ENCODE measurements at regions of chr9 and their contacts with region 1.

Region 1: DNA sequence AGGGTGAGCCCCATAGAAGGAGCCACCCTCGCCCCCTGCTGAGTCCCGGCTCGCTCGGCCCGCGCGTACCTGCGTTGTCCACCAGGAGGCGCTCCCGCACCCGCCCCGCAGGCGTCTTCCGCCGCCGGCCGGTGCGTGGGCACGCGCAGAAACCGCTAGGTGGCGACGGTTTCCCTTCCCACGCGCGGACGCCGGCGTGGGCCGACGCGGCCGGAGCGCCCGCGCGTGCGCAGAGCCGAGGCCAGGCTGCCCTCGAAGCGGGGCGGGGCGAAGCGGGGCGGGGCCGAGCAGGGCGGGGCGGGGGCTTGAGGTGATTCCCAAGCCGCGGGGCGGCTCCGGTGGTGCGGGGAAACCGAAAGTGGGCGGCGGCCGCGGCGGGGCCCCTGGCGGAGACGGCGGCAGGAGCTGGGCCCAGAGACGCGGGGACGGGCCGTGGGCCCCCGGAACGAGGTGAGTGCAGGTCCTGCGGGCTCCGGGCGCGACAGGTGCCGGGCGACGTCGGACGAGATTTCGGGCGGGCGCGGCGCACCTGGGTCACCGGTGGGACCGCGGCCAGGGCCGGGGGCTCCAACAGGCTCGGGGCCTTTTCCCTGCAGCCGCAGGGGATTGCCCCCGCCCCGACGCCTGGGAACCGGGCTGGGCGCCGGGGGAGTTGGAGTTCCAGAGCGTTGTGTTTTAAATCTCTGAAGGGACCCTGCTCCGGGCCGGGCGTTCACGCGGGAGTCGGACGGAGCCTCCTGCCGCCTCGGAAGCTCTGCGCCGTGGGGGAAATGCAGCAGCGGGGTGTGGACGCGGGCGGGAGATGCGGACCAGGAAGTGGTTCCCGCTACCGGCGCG is at the start of gene TDRD7:
- DNase-seq: peak; percentile 97
- H3K4me3 Mint-ChIP-seq: peak within 1 kb of the TSS; percentile 87
- H3K27ac Mint-ChIP-seq: peak within 1 kb of the TSS; percentile 81
- H3K4me1 Mint-ChIP-seq: peaks cover 23% of the 10 kb centered on the region
- H3K27me3 Mint-ChIP-seq: peaks cover 34% of the 10 kb centered on the region
- total RNA-seq, gene TDRD7: 5.5 and 6.3 TPM in 2 replicates

Region 2: DNA sequence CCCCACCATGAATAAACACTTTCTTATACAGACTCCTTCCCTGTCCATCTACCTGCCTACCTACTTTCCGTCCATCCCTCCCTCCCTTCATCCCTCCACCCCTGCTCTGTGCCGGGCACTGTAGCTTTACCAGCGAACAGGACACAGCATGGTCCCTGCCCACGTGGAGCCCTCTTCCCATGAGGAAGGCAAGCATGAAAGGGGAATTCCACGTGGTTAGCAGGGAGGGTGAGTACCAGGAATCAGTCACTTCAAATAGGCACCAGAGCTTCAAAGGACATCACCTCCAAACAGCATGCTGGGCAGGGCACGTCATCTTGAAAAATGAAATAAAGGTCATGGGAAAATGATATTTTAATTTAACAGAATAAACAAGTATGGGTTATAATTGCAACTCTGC is 35.1 kb before region 1 on chr9:
- intact Hi-C with region 1: no loop called
- DNase-seq: no peak
- H3K4me3 Mint-ChIP-seq: no peak overlapping the region
- H3K27ac Mint-ChIP-seq: no peak overlapping the region
- H3K4me1 Mint-ChIP-seq: no peaks in the 10 kb centered on the region
- H3K27me3 Mint-ChIP-seq: no peaks in the 10 kb centered on the region

Region 3: DNA sequence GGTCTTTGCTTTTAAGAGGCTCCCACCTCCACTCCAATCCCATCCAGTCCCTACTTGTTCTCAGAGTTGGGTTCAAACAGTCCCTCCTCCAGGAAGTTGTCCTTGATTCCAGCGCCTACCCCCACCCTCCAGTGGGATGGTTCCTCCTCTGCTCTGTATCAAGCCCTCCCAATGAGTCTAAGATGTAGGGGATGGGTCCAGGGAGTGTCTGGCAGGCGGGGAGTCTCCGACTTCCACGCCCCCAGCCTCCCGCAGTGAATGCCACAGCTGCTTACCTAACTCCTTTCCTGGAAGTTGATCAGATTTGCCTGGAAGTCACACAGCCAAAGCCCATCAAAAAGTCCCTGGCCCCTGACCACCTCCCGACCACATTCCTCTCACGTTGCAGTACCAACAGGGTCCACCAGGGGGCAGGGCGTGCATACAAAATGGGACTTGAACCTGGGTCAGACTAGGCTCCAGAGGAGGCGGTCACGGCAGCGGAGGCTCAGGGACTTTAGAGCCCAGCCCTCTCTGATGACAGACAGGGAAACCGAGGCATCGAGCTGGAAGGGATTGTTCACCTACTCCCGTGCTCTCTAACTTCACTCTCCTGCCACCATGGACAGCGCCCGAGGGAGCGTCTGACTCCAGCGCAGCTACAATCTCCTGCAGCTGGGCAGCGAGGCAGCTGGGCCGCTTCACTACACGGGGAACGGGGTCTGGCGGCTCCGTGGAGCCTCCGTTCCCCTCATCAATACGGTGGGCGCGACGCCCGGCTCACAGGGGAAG is 25.1 kb before region 1 on chr9:
- intact Hi-C with region 1: loop called (anchors 1 kb)
- DNase-seq: peak; percentile 93
- H3K4me3 Mint-ChIP-seq: no peak overlapping the region
- H3K27ac Mint-ChIP-seq: no peak overlapping the region
- H3K4me1 Mint-ChIP-seq: peaks cover 26% of the 10 kb centered on the region
- H3K27me3 Mint-ChIP-seq: peaks cover 24% of the 10 kb centered on the region

Region 4: DNA sequence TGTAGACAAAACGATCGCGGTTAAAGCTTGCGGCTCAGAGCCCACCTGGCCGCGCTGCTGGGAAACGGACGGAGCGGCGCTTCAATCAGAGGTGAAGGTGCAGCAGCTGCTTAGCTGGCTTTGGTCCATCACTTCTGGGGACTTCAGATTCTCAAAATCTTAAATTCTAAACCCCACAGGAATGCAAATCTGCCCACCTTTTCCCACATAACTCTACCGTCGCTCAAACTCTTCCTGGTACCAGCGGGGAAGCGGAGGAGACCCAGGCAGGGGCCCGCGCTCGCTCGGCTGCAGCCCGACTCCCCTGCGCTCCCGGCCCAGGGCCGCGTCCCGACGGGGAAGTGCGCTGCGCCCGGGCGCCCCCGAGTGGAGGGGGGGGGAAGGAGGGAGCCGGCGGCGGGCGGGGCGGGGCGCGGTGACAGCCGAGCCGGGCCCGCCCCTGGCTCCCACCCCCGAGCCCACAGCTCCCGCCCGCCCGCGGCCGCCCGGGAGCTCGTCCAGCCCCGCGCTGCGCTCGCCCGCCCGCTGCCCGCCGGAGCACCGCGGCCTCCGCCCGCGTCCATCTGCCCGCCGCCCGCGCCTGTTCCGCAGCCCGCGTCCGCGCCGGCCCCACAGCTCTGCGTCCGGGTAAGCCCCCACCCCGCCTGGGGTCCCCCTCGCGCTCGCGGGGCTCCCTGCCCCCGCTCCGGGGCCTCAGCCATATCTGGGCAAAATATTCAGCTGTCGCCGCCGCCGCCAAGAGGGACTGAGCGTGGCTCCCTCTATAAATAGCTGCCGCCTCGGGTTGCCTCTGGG is 89.4 kb after region 1 on chr9 and contains the start of gene TMOD1:
- intact Hi-C with region 1: loop called (anchors 5 kb)
- DNase-seq: peak; percentile 83
- H3K4me3 Mint-ChIP-seq: peak within 1 kb of the TSS; percentile 76
- H3K27ac Mint-ChIP-seq: peak within 1 kb of the TSS; percentile 13
- H3K4me1 Mint-ChIP-seq: peaks cover 20% of the 10 kb centered on the region
- H3K27me3 Mint-ChIP-seq: peaks cover 51% of the 10 kb centered on the region
- total RNA-seq, gene TMOD1: 0.71 and 0.91 TPM in 2 replicates

Region 5: GRCh38 chr9:97615439-97616072 is 203.5 kb after region 1 on chr9:
- intact Hi-C with region 1: loop called (anchors 1 kb)
- DNase-seq: peak; percentile 89
- H3K4me3 Mint-ChIP-seq: no peak overlapping the region
- H3K27ac Mint-ChIP-seq: no peak overlapping the region
- H3K4me1 Mint-ChIP-seq: peaks cover 20% of the 10 kb centered on the region
- H3K27me3 Mint-ChIP-seq: no peaks in the 10 kb centered on the region

Region 6: DNA sequence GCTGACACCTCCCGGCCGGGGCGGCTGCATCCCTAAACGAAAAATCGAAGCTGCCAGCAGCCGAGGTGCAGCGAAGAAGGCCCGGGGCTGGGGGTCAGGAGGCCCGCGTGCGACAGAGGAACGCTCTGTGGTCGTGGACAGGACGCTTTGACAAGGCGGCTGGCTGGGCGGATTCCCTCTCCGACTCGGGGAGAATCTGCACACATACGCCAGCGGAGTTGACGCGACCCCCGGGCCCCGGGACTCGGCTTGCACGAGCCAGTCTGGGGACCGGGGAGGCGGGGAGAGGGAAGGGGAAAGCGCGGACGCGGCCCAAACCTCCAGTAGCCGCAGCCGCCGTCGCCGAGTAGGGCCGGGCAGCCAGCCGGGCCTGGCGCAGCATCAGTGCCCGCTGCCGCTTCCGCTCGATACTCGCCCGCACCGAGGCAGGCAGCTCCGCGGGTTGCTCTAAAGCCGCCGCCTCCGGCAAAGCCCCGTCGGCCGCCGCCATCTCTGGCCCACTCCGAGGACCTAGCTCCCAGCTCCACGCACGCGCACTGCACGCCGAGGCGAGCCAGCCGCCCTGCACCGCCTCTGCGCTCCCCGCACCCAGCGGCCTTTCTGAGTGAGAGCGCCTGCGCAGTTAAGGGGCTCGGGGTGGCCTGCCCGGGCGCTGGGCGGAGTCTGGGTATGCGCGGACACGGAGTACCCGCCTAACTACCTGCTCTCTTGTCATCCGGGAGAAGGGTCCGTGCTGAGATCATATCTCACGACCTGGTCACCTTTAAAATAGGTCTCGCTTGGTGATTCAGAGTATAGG is 285.0 kb after region 1 on chr9 and contains the start of gene XPA:
- intact Hi-C with region 1: loop called (anchors 5 kb)
- DNase-seq: peak; percentile 99
- H3K4me3 Mint-ChIP-seq: peak within 1 kb of the TSS; percentile 91
- H3K27ac Mint-ChIP-seq: peak within 1 kb of the TSS; percentile 89
- H3K4me1 Mint-ChIP-seq: peaks cover 47% of the 10 kb centered on the region
- H3K27me3 Mint-ChIP-seq: no peaks in the 10 kb centered on the region
- total RNA-seq, gene XPA: 8.9 and 12.0 TPM in 2 replicates